RWPE1 (cell line): ENCODE measurements at regions of chr1 and their contacts with region 1.

Region 1: DNA sequence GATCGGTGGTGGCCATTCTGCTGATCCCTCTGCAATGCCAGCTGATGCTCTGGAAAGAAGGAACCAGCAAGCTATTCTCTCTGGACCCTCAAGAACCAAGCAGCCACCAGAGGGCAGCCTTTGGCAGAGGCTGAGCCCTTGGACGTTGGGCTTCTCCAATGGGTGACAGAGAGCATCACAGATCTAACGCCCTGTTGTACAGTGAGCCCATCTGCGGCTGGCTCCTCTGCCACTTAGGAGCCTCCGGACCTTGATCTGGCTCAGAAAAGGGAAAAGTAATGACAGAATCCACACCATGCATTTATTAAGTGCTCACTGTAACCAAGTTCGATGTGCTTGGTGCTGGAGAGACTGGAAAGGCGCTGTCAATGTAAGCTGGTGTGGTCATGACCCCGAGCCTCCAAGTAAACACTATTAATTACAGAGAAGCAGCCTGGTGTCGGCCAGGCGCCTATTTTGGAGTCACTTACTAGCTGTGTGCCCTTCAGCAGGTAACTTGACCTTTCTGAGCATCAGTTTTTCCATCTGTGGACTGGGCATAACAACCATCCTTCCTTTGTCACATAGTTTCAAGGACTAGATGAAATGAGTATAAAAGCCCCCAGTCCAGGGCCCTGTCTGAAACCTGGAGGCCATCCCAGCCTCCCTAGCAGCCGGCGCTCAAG is 34.9 kb downstream of the ECE1 start:
- DNase-seq: peak; percentile 54
- H3K27ac ChIP-seq: peak overlapping the region; percentile 77; the same call in 1 of the 2 replicates
- CTCF ChIP-seq: peak; percentile 79

Region 2: GRCh38 chr1:21270086-21270689 is 14.8 kb after region 1 on chr1:
- CTCF ChIA-PET with region 1: interaction called, 25 read pairs
- POLR2A ChIA-PET with region 1: no interaction called
- DNase-seq: no peak
- H3K27ac ChIP-seq: peak overlapping the region; percentile 8; the same call in 1 of the 2 replicates
- CTCF ChIP-seq: peak; percentile 74

Region 3: DNA sequence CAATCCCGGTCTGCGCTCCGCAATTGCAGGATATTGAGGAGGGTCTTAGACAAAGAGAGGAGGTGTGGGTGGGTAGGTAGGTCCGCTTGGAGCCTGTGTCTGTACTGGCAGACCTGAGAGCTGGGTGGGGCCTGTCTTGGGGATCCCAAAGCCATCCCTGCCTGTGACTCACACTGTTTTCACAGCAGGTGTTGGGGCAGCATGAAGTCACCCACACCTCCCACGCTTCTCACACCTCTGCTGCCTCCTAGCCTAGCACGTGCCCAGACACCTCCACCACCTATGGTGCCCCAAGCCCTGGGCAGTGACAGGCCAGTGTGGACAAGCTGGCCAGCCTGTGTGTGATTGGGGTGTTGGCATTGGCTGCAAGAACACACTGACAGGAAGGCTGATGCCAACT is 100.5 kb after region 1 on chr1:
- CTCF ChIA-PET with region 1: interaction called, 11 read pairs
- POLR2A ChIA-PET with region 1: interaction called, 5 read pairs
- DNase-seq: no peak
- H3K27ac ChIP-seq: no peak overlapping the region; the same call in 1 of the 2 replicates
- CTCF ChIP-seq: no peak